ENCODE measurements at regions of chr7 and their contacts with region 1.

Region 1: DNA sequence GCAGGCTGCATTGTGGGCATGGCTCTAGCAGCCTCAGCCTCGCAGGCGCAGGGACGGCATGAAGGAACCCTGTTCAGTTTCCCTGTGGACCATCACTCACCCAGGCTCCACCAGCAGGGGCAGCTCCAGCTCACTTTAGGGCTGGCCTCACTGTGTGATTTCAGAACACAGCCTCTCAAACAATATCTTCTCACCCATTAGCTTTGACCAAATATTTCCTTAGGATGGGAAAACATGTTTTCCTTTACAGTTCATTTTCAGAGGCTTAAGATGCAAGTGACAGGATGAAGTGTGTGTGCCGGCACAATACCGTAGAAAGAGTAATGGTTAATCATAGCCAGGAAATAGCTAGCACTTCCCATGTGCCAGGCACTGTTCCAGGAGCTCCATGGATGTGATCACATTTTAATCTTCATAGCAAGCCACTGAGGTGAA is 58.2 kb downstream of the LANCL2 start:
- DNase-seq: no peak
- ATAC-seq: peak; percentile 55; the same call in 2 of the 3 replicates
- H3K4me3 ChIP-seq: no peak overlapping the region
- H3K27ac ChIP-seq: no peak overlapping the region
- H3K4me1 ChIP-seq: peaks cover 20% of the 10 kb centered on the region
- H3K27me3 ChIP-seq: no peaks in the 10 kb centered on the region
- CTCF ChIP-seq: no peak
- EP300 ChIP-seq: no peak
- POLR2A ChIP-seq: no peak
- RAD21 ChIP-seq: no peak

Region 2: GRCh38 chr7:55572378-55573233 is 149.3 kb after region 1 on chr7 and contains the start of gene VOPP1:
- CTCF ChIA-PET with region 1: no interaction called
- POLR2A ChIA-PET with region 1: no interaction called
- in situ Hi-C with region 1: no loop called
- intact Hi-C with region 1: loop called (anchors 10 kb)
- DNase-seq: peak; percentile 35
- ATAC-seq: peak; percentile 79
- H3K4me3 ChIP-seq: peak within 1 kb of the TSS; percentile 74 to 85 (median 84)
- H3K27ac ChIP-seq: peak within 1 kb of the TSS; percentile 91
- H3K4me1 ChIP-seq: peaks cover 41% of the 10 kb centered on the region
- H3K27me3 ChIP-seq: no peaks in the 10 kb centered on the region; a peak in 1 of 5 replicates
- CTCF ChIP-seq: no peak
- EP300 ChIP-seq: no peak
- POLR2A ChIP-seq: no peak
- RAD21 ChIP-seq: no peak; the same call in 1 of the 2 replicates
- total RNA-seq, gene VOPP1: 49.9 and 55.3 TPM in 2 replicates

Region 3: DNA sequence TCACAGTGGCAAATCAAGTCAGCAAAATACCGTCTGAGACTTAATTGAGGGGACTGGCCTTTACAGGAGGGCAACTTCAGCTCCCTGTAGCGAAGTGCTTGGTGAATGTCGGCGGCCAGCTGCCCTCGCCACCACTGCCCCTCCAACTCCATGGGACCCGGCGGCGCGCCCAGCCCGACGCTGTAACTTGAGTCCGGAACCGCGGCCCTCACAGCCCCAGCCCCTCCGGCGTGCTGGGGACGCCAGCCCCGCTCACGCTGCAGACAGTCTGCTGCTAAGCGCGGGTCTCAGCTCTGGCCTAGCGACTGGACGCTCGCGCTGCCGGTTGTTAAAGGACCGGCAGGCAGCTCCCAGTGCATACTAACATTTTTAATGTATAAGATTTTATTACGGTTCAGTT is 806.3 kb after region 1 on chr7:
- CTCF ChIA-PET with region 1: no interaction called
- POLR2A ChIA-PET with region 1: no interaction called
- in situ Hi-C with region 1: no loop called
- intact Hi-C with region 1: no loop called
- DNase-seq: no peak
- ATAC-seq: no peak
- H3K4me3 ChIP-seq: no peak overlapping the region
- H3K27ac ChIP-seq: no peak overlapping the region
- H3K4me1 ChIP-seq: no peaks in the 10 kb centered on the region
- H3K27me3 ChIP-seq: no peaks in the 10 kb centered on the region
- CTCF ChIP-seq: no peak
- EP300 ChIP-seq: no peak
- POLR2A ChIP-seq: no peak
- RAD21 ChIP-seq: no peak

Measured in HepG2 (cell line).